PC-3 (cell line): ENCODE measurements at regions of chr12 and their contacts with region 1.

Region 1: DNA sequence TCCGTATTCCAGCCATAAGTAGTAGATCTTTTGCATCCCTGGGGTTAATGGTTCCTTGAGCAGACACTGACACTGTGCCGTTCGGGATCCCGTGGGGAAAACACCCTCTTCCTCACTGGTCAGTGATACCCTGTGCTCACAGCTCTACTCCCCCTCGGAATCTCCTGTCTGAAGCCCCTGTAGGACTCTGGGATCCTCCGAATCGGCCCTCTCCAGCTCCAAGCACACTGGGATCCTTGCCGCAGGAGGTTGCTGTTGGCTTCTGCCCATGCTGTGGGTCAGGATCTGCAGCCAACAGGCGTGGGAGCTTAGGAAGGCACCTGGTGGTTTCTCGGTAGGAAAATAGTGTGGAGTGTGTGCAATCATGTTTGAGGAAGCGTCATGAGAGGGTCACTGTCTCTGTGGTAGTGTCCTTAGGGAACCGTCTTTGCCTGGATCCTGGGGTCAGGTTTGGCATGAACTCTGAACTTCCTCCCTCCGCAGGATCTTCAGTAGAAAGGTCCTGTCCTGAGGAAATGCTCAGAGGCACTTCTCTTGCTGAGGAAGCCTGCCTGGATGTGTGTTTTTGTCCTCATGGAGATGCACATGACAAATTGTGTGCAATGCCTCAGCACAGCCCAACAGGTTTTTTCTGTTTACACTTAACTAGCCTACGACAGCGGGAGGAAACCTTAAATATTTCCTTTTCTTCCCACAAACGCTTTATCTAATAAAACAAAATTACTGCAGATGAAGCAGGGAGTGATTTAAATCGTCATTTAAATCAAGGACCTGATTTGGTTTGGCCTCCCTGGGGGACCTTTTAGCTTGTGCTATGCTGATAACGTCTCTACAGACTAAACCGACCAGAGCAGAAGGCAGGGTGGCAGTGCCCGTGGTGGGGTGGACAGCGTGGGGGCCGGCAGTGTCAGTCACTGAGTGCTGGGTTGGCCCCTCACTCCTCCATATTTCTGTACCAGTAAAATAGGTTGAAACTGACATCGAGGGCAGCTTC is 18.7 kb downstream of the FBXL14 start:
- DNase-seq: peak; percentile 66
- ATAC-seq: peak; percentile 48
- H3K4me3 ChIP-seq: peak overlapping the region; percentile 52
- H3K27ac ChIP-seq: peak overlapping the region; percentile 57
- H3K4me1 ChIP-seq: peaks cover 23% of the 10 kb centered on the region
- H3K27me3 ChIP-seq: no peaks in the 10 kb centered on the region
- CTCF ChIP-seq: no peak

Region 2: DNA sequence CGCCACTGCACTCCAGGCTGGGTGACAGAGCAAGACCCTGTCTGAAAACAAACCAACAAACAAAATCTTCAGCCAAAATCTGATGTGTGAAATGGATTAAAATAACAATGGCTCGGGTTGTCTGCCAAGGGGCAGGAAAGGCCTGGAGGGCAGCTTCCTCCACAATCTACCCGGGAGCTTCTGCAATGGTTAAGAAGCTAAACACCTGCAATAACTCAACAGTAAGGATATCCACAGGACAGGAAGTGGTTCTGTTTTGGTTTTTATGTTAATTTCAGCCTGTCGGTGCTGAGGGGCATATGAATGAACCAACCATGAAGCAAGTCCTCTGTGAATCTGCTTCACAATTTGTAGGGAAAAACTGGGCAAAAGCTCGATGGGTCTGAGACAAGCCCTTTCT is 660.6 kb before region 1 on chr12:
- CTCF ChIA-PET with region 1: no interaction called
- POLR2A ChIA-PET with region 1: interaction called, 10 read pairs
- intact Hi-C with region 1: no loop called
- DNase-seq: peak; percentile 32
- ATAC-seq: peak; percentile 5; the same call in 1 of the 2 replicates
- H3K4me3 ChIP-seq: no peak overlapping the region
- H3K27ac ChIP-seq: peak overlapping the region; percentile 99
- H3K4me1 ChIP-seq: peaks cover 32% of the 10 kb centered on the region
- H3K27me3 ChIP-seq: no peaks in the 10 kb centered on the region
- CTCF ChIP-seq: no peak

Region 3: GRCh38 chr12:1993341-1993740 is 417.6 kb after region 1 on chr12:
- CTCF ChIA-PET with region 1: no interaction called
- POLR2A ChIA-PET with region 1: no interaction called
- intact Hi-C with region 1: no loop called
- DNase-seq: peak; percentile 86
- ATAC-seq: peak; percentile 86
- H3K4me3 ChIP-seq: no peak overlapping the region
- H3K27ac ChIP-seq: peak overlapping the region; percentile 87
- H3K4me1 ChIP-seq: peaks cover 20% of the 10 kb centered on the region
- H3K27me3 ChIP-seq: no peaks in the 10 kb centered on the region
- CTCF ChIP-seq: no peak